Ascending aorta (tissue), 2 donors: ENCODE measurements at regions of chr21 and their contacts with region 1.

Region 1: GRCh38 chr21:38805328-38806152 is at the start of gene ETS2:
- DNase-seq: peak; percentile 65 to 94
- H3K4me3 ChIP-seq: peak within 1 kb of the TSS; percentile 91 to 100
- H3K27ac ChIP-seq: peak within 1 kb of the TSS; percentile 99
- H3K4me1 ChIP-seq: peaks cover 11 to 22% of the 10 kb centered on the region in 2 donors
- H3K27me3 ChIP-seq: no peaks in the 10 kb centered on the region
- CTCF ChIP-seq: no peak
- total RNA-seq, gene ETS2: 113 TPM

Region 2: GRCh38 chr21:38486221-38486620 is 319.3 kb before region 1 on chr21:
- intact Hi-C with region 1: loop called (anchors 5 kb)
- DNase-seq: peak in 1 of 2 donors; percentile 84
- H3K4me3 ChIP-seq: no peak overlapping the region
- H3K27ac ChIP-seq: peak overlapping the region; percentile 77 to 84
- H3K4me1 ChIP-seq: peaks cover 10 to 56% of the 10 kb centered on the region in 2 donors
- H3K27me3 ChIP-seq: no peaks in the 10 kb centered on the region
- CTCF ChIP-seq: no peak

Region 3: GRCh38 chr21:38661197-38661871 is 144.2 kb before region 1 on chr21:
- intact Hi-C with region 1: no loop called
- DNase-seq: peak in 1 of 2 donors; percentile 81
- H3K4me3 ChIP-seq: peak overlapping the region; percentile 64 to 82
- H3K27ac ChIP-seq: peak overlapping the region; percentile 92 to 96
- H3K4me1 ChIP-seq: peaks cover 0 to 5% of the 10 kb centered on the region in 2 donors
- H3K27me3 ChIP-seq: no peaks in the 10 kb centered on the region
- CTCF ChIP-seq: no peak

Region 4: DNA sequence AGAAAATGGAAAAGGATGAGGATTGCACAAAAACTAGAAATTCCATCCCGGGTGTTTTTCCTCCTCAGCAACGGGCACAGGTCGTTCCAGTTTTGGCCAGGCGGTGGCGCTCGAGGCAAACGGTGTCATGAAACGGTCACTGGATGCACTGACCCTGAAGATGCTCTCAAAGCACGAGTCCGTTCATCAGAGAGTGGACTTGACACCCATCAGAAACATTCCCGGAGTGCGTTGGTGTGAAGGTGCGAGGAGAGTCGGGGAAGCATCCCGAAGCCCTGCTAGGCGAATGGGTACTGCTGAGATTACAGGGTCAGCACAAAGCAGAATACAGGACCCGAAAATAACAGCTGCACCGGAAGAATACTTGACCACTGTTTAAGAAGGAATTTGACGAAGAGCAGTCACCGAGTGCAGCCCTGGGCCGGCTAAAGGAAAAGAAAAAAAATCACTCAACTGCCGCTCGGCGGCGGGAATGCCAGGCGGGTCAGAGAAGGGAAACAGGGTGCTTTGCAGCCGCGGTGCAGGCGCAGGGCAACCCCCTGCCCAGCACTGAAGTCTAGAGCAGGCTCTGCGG is 71.5 kb before region 1 on chr21:
- intact Hi-C with region 1: loop called (anchors 1 kb)
- DNase-seq: peak; percentile 55 to 96
- H3K4me3 ChIP-seq: peak overlapping the region; percentile 36 to 56
- H3K27ac ChIP-seq: peak overlapping the region; percentile 78 to 81
- H3K4me1 ChIP-seq: peaks cover 0 to 20% of the 10 kb centered on the region in 2 donors
- H3K27me3 ChIP-seq: no peaks in the 10 kb centered on the region
- CTCF ChIP-seq: peak; percentile 84 to 92 (median 92)

Region 5: DNA sequence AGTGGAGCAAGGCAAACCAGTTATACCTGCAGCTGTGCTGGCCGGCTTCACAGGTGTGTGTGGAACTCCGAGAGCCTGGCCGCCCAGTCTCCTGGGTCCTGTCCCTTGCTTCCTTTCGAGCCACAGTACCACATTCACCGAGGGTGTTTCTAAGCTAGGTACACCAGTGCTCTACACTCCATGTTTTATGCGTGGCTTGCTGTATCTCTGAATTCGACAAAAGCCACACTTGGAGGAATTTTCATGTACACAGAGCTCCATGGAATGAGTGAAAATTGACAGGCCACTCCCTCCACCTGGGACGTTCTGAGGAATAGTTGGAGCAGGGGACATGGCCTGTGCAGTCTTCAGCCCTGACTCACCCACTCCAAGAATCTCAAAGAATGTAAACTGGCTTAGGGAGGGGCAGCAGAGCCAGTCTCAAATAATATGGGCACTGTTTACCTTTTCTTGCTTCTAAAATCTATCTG is 14.2 kb after region 1 on chr21:
- intact Hi-C with region 1: loop called (anchors 2 kb)
- DNase-seq: peak in 1 of 2 donors; percentile 63
- H3K4me3 ChIP-seq: no peak overlapping the region
- H3K27ac ChIP-seq: peak overlapping the region; percentile 93 to 96
- H3K4me1 ChIP-seq: peaks cover 22 to 54% of the 10 kb centered on the region in 2 donors
- H3K27me3 ChIP-seq: no peaks in the 10 kb centered on the region
- CTCF ChIP-seq: no peak

Region 6: DNA sequence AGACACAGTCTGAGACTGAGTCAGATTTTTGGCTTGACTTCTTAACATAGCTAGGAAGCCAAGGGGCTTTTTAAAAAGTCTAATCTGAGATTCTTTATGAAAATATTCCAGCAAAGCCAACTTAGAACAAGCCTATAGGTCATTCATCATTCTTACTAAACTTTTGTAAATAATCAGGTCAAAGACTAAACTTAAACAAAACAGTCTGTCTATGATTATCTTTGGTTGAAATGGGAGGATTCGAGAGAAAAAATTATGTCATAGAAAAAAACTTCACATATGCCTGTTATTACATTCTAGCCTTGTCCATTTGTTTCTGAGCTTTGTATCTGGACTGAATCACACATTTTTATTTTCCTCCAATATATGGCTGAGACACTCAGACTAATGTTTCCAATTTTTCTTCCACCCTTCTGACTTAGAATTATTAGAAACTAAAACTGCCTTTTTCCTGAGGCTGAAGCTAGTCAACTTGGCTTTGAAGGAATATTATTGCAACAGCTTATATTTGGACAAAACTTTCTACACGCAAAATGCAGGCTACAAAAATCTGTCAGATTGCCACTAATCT is 83.5 kb after region 1 on chr21:
- intact Hi-C with region 1: no loop called
- DNase-seq: no peak
- H3K4me3 ChIP-seq: no peak overlapping the region
- H3K27ac ChIP-seq: peak overlapping the region; percentile 71 to 74
- H3K4me1 ChIP-seq: peaks cover 0 to 10% of the 10 kb centered on the region in 2 donors
- H3K27me3 ChIP-seq: no peaks in the 10 kb centered on the region
- CTCF ChIP-seq: no peak

Region 7: DNA sequence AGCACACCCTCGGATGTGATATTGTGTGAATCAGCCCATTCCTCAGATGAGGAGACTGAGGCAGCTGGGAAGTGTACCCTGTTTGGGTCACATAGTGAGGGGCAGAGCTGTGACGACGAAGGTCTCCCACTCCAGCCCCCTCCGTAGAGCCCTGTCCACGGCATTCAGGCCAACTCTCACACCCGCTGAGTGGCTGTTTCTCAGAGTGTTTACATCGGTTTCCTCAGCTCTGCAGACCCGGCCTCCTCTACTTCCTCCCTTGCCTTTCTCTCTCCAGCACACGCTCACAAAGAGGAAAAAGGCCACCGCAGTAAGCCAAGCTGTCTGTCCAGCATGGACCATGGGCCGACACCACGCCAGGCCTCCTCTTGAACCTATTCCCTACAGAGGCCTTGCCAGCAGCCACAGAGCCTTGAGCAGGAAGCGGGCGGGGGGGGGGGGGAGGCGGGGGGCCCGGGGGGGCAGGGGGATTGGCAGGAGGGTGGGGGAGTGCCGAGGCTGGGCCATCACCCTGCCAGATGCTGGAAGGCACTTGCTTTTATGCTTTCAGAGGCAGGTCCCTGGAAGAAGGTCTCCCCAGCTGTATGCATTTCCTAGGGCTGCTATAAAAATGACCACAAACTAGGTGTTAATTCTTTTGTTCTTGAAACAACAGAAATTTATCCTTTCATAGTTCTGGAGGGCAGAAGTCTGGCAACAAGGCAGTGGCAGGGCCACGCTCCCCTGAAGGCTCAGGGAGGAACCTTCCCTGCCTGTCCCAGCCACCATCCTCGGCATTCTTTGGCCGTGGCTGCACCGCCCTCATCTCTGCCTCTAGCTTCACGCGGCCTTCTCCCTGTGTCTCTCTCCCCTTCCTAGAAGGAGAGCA is 199.3 kb after region 1 on chr21:
- intact Hi-C with region 1: loop called (anchors 5 kb)
- DNase-seq: peak; percentile 58 to 81
- H3K4me3 ChIP-seq: no peak overlapping the region
- H3K27ac ChIP-seq: peak overlapping the region; percentile 90 to 95
- H3K4me1 ChIP-seq: peaks cover 14 to 36% of the 10 kb centered on the region in 2 donors
- H3K27me3 ChIP-seq: no peaks in the 10 kb centered on the region
- CTCF ChIP-seq: peak in 1 of 3 experiments; percentile 15

Region 8: DNA sequence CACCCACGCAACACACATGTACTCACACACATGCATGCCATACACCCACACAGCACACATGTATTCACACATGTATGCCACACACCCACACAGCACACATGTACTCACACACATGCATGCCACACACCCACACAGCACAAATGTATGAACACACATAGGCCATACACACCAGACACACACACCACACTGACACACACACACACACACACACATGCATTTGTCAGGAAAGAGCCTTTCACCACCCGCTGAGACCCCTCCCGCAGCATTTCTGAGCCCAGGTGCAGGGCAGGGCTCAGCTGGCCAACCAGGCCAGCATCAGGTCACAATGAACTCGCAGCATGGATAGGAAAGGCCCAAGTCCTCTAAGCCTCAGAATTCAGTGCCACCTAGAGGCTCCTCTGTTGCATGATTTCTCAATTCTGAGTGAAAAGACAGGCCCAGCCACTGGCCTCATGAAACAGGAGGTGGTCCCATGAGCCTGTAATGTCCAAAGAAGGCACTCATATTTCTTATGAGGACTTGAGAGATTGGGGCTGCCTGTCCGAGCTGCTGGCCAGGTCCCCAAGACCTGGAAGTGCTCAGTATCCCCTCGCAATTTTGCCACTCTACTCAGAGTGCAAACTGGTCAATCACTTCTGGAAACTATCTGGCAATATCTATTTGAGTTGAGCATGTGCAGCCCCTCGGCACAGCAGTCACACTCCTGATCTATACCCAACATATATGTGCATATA is 320.4 kb after region 1 on chr21:
- intact Hi-C with region 1: loop called (anchors 2 kb)
- DNase-seq: peak in 1 of 2 donors; percentile 84
- H3K4me3 ChIP-seq: no peak overlapping the region
- H3K27ac ChIP-seq: peak overlapping the region in 1 of 2 donors; percentile 81
- H3K4me1 ChIP-seq: no peaks in the 10 kb centered on the region
- H3K27me3 ChIP-seq: no peaks in the 10 kb centered on the region
- CTCF ChIP-seq: peak; percentile 54 to 79 (median 76)

Region 9: GRCh38 chr21:39137248-39138178 is 332.0 kb after region 1 on chr21:
- intact Hi-C with region 1: no loop called
- DNase-seq: no peak
- H3K4me3 ChIP-seq: no peak overlapping the region
- H3K27ac ChIP-seq: peak overlapping the region in 1 of 2 donors; percentile 12
- H3K4me1 ChIP-seq: no peaks in the 10 kb centered on the region
- H3K27me3 ChIP-seq: no peaks in the 10 kb centered on the region
- CTCF ChIP-seq: no peak

Region 10: GRCh38 chr21:39281207-39281606 is 475.7 kb after region 1 on chr21:
- intact Hi-C with region 1: no loop called
- DNase-seq: no peak
- H3K4me3 ChIP-seq: no peak overlapping the region
- H3K27ac ChIP-seq: no peak overlapping the region
- H3K4me1 ChIP-seq: peaks cover 0 to 3% of the 10 kb centered on the region in 2 donors
- H3K27me3 ChIP-seq: no peaks in the 10 kb centered on the region
- CTCF ChIP-seq: no peak